ENCODE measurements at regions of chr5 and their contacts with region 1.

Region 1: GRCh38 chr5:160439205-160439600 is 17.5 kb downstream of the PTTG1 start:
- DNase-seq: peak; percentile 89
- ATAC-seq: peak; percentile 75
- H3K4me3 ChIP-seq: peak overlapping the region; percentile 70
- H3K27ac ChIP-seq: peak overlapping the region; percentile 82
- H3K4me1 ChIP-seq: peaks cover 54% of the 10 kb centered on the region
- H3K27me3 ChIP-seq: no peaks in the 10 kb centered on the region
- CTCF ChIP-seq: peak; percentile 83 to 95 (median 88)
- EP300 ChIP-seq: no peak; a peak in 1 of 4 replicates
- POLR2A ChIP-seq: peak; percentile 50; the same call in 1 of the 2 replicates
- RAD21 ChIP-seq: peak; percentile 84

Region 2: GRCh38 chr5:160253441-160253840 is 185.8 kb before region 1 on chr5:
- CTCF ChIA-PET with region 1: no interaction called
- POLR2A ChIA-PET with region 1: no interaction called
- RAD21 ChIA-PET with region 1: no interaction called
- SMC1A ChIA-PET with region 1: no interaction called
- in situ Hi-C with region 1: no loop called
- intact Hi-C with region 1: no loop called
- DNase-seq: no peak
- ATAC-seq: no peak
- H3K4me3 ChIP-seq: no peak overlapping the region
- H3K27ac ChIP-seq: no peak overlapping the region
- H3K4me1 ChIP-seq: no peaks in the 10 kb centered on the region
- H3K27me3 ChIP-seq: no peaks in the 10 kb centered on the region
- CTCF ChIP-seq: no peak
- EP300 ChIP-seq: no peak
- POLR2A ChIP-seq: no peak
- RAD21 ChIP-seq: no peak

Region 3: DNA sequence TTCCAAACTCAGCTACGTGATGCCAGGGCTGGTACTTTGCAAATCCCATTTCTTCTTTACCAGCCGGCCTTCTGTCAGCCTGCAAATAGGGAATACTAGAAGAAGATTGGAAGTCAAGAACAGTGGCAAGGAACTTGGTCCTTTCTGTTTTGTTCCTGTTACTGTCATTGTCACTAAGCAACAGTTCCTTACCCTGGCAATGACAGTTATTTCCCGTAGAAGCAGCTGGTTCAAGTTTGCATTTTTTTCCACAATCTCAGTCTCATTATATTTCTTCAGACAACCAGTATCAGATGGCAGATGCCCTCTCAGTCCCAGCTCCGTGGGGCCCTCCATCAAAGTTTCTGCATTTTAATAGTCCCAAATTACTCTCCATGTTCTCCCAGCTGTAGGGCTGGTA is 59.7 kb before region 1 on chr5:
- CTCF ChIA-PET with region 1: no interaction called
- POLR2A ChIA-PET with region 1: no interaction called
- RAD21 ChIA-PET with region 1: no interaction called
- SMC1A ChIA-PET with region 1: no interaction called
- in situ Hi-C with region 1: no loop called
- intact Hi-C with region 1: no loop called
- DNase-seq: no peak
- ATAC-seq: no peak
- H3K4me3 ChIP-seq: no peak overlapping the region
- H3K27ac ChIP-seq: no peak overlapping the region
- H3K4me1 ChIP-seq: no peaks in the 10 kb centered on the region
- H3K27me3 ChIP-seq: peaks cover 0 to 5% of the 10 kb centered on the region in 2 experiments; a peak in 1 of 4 replicates
- CTCF ChIP-seq: no peak
- EP300 ChIP-seq: no peak
- POLR2A ChIP-seq: no peak
- RAD21 ChIP-seq: no peak

Region 4: DNA sequence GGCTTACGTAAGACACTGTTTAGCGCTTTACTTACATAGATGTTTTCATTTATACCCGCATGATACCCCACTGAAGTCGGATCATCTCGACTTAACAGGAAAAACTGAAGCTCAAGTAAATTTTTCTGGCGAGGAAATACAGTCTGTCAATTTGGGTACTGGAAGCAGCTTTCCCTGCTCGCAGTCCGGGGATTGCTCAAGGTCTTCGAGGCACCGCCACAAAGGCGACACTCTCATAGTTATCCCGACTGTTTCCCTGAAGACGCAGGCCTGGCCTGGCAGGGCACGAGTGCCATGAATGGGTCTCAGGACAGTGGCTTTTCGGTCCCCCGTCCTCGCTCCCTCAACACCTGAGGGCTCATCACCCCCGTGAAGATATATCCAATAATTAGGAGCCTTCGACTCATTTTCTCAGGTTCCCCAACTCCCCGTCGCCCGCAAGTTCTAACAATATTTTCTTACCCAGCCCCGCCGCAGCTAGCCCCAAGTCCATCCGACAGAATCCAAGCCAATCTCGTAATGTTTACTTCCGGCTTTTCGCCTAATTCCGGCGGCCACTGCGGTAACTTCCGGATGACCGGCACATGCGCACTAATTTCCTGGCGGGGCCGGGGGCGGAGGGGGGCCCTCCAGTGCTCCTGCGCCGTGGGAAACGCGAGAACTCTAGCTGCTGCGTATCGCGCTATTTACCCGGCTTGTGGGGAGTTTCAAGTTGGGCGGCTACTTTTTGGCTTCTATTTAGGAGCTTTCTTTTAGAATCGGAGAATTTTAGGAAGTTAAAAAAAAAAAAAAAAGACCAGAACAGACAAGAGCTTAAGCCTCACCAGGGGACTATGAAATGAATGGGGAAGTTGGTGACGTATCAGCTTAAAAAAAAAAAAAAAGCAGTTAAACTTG is 20.4 kb before region 1 on chr5 and contains the start of gene SLU7:
- CTCF ChIA-PET with region 1: interaction called, 133 read pairs
- POLR2A ChIA-PET with region 1: interaction called, 50 read pairs
- RAD21 ChIA-PET with region 1: interaction called, 109 read pairs
- SMC1A ChIA-PET with region 1: interaction called, 135 read pairs
- in situ Hi-C with region 1: no loop called
- intact Hi-C with region 1: no loop called
- DNase-seq: peak; percentile 91
- ATAC-seq: peak; percentile 80
- H3K4me3 ChIP-seq: peak within 1 kb of the TSS; percentile 72
- H3K27ac ChIP-seq: peak within 1 kb of the TSS; percentile 71
- H3K4me1 ChIP-seq: peaks cover 15% of the 10 kb centered on the region
- H3K27me3 ChIP-seq: no peaks in the 10 kb centered on the region
- CTCF ChIP-seq: no peak
- EP300 ChIP-seq: no peak; a peak in 1 of 4 replicates
- POLR2A ChIP-seq: peak; percentile 86
- RAD21 ChIP-seq: no peak
- polyA plus RNA-seq, gene SLU7: 40.9 to 41.2 TPM

Region 5: GRCh38 chr5:160467555-160468362 is 28.6 kb after region 1 on chr5:
- CTCF ChIA-PET with region 1: interaction called, 230 read pairs
- POLR2A ChIA-PET with region 1: interaction called, 156 read pairs
- RAD21 ChIA-PET with region 1: interaction called, 329 read pairs
- SMC1A ChIA-PET with region 1: interaction called, 511 read pairs
- in situ Hi-C with region 1: no loop called
- intact Hi-C with region 1: loop called (anchors 1 kb)
- DNase-seq: peak; percentile 96
- ATAC-seq: peak; percentile 80
- H3K4me3 ChIP-seq: peak overlapping the region; percentile 88
- H3K27ac ChIP-seq: peak overlapping the region; percentile 96
- H3K4me1 ChIP-seq: peaks cover 35% of the 10 kb centered on the region
- H3K27me3 ChIP-seq: no peaks in the 10 kb centered on the region
- CTCF ChIP-seq: no peak
- EP300 ChIP-seq: peak; percentile 84 to 95
- POLR2A ChIP-seq: peak; percentile 91
- RAD21 ChIP-seq: peak; percentile 8; the same call in 1 of the 2 replicates

Region 6: GRCh38 chr5:160493806-160494338 is 54.7 kb after region 1 on chr5:
- CTCF ChIA-PET with region 1: interaction called, 22 read pairs
- POLR2A ChIA-PET with region 1: interaction called, 4 read pairs
- RAD21 ChIA-PET with region 1: interaction called, 10 read pairs
- SMC1A ChIA-PET with region 1: interaction called, 18 read pairs
- in situ Hi-C with region 1: no loop called
- intact Hi-C with region 1: no loop called
- DNase-seq: no peak
- ATAC-seq: peak; percentile 7; the same call in 1 of the 3 replicates
- H3K4me3 ChIP-seq: no peak overlapping the region
- H3K27ac ChIP-seq: no peak overlapping the region
- H3K4me1 ChIP-seq: peaks cover 23% of the 10 kb centered on the region
- H3K27me3 ChIP-seq: no peaks in the 10 kb centered on the region
- CTCF ChIP-seq: no peak
- EP300 ChIP-seq: no peak
- POLR2A ChIP-seq: no peak
- RAD21 ChIP-seq: no peak

Region 7: GRCh38 chr5:160565376-160565775 is 126.2 kb after region 1 on chr5:
- CTCF ChIA-PET with region 1: interaction called, 10 read pairs
- POLR2A ChIA-PET with region 1: no interaction called
- RAD21 ChIA-PET with region 1: interaction called, 3 read pairs
- SMC1A ChIA-PET with region 1: interaction called, 12 read pairs
- in situ Hi-C with region 1: no loop called
- intact Hi-C with region 1: no loop called
- DNase-seq: no peak
- ATAC-seq: no peak
- H3K4me3 ChIP-seq: no peak overlapping the region
- H3K27ac ChIP-seq: no peak overlapping the region
- H3K4me1 ChIP-seq: no peaks in the 10 kb centered on the region
- H3K27me3 ChIP-seq: no peaks in the 10 kb centered on the region
- CTCF ChIP-seq: no peak
- EP300 ChIP-seq: no peak
- POLR2A ChIP-seq: no peak
- RAD21 ChIP-seq: no peak

Region 8: GRCh38 chr5:160668356-160668755 is 229.2 kb after region 1 on chr5:
- CTCF ChIA-PET with region 1: no interaction called
- POLR2A ChIA-PET with region 1: no interaction called
- RAD21 ChIA-PET with region 1: no interaction called
- SMC1A ChIA-PET with region 1: no interaction called
- in situ Hi-C with region 1: no loop called
- intact Hi-C with region 1: no loop called
- DNase-seq: no peak
- ATAC-seq: no peak
- H3K4me3 ChIP-seq: no peak overlapping the region
- H3K27ac ChIP-seq: no peak overlapping the region
- H3K4me1 ChIP-seq: no peaks in the 10 kb centered on the region
- H3K27me3 ChIP-seq: no peaks in the 10 kb centered on the region; a peak in 1 of 4 replicates
- CTCF ChIP-seq: no peak
- EP300 ChIP-seq: no peak
- POLR2A ChIP-seq: no peak
- RAD21 ChIP-seq: no peak

Region 9: DNA sequence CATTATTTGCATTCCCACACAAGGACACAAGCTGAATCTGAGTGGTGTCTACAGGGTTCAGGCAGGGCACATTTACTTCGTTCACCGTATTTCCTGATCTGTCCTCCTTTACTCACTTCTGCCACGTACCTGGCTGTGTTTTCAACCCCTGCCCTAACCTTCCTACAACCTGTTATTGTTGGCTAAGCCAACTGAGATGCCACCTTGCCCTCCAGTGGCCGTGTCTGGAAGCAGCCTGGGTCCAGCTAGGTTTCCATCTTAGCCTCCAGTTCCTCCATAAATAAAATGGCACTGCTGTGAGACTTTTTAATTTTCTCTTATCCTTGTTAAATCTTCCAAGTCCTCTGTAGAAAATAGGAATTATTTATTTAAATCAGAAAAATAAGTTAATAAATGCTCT is 348.0 kb after region 1 on chr5:
- CTCF ChIA-PET with region 1: interaction called, 36 read pairs
- POLR2A ChIA-PET with region 1: no interaction called
- RAD21 ChIA-PET with region 1: interaction called, 15 read pairs
- SMC1A ChIA-PET with region 1: interaction called, 14 read pairs
- in situ Hi-C with region 1: loop called (anchors 10 kb)
- intact Hi-C with region 1: loop called (anchors 2 kb)
- DNase-seq: peak; percentile 17
- ATAC-seq: peak; percentile 88
- H3K4me3 ChIP-seq: no peak overlapping the region
- H3K27ac ChIP-seq: no peak overlapping the region
- H3K4me1 ChIP-seq: no peaks in the 10 kb centered on the region
- H3K27me3 ChIP-seq: no peaks in the 10 kb centered on the region
- CTCF ChIP-seq: peak; percentile 47 to 55 (median 51); a peak in 5 of 6 replicates
- EP300 ChIP-seq: no peak
- POLR2A ChIP-seq: no peak
- RAD21 ChIP-seq: peak; percentile 59

Region 10: GRCh38 chr5:161530700-161531099 is 1091.5 kb after region 1 on chr5:
- CTCF ChIA-PET with region 1: no interaction called
- POLR2A ChIA-PET with region 1: no interaction called
- RAD21 ChIA-PET with region 1: no interaction called
- SMC1A ChIA-PET with region 1: no interaction called
- in situ Hi-C with region 1: no loop called
- intact Hi-C with region 1: loop called (anchors 5 kb)
- DNase-seq: no peak
- ATAC-seq: no peak
- H3K4me3 ChIP-seq: no peak overlapping the region
- H3K27ac ChIP-seq: no peak overlapping the region
- H3K4me1 ChIP-seq: no peaks in the 10 kb centered on the region
- H3K27me3 ChIP-seq: no peaks in the 10 kb centered on the region
- CTCF ChIP-seq: no peak
- EP300 ChIP-seq: no peak
- POLR2A ChIP-seq: no peak
- RAD21 ChIP-seq: no peak